GM10248 (cell line): ENCODE measurements at regions of chr6 and their contacts with region 1.

Region 1: DNA sequence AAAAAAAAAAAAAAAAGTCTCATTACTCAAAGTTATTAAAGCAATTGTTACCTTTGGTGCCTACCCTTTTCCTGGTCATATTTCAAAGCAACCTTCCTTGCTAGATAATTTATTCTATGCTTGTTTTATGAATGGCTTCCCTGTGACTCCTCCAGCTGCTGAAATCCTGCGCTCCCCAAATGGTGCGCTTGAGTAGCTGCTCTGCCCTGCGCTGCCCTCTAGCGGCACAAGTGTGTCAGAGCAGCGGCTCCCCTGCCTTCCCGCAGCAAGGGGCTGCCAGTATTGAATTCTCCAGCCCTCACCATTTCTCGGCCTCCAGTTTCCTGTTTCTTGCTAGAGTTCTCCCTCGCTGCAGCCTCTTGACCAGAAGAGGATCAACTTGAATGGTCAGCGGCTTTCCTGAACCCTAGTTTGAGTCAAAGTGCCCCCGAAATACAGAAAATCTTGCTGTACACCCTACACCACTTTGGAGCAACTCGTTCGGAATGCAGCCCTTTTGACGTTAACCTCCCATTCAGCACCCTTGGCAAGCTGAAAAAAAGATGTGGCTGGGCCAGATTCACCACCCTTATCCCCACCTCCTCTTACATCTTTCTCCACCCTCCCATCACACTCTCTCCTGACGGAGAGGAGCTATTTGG is 60.4 kb upstream of the KLHL31 start:
- DNase-seq: peak; percentile 84
- CTCF ChIP-seq: peak; percentile 99

Region 2: GRCh38 chr6:53426667-53427270 is 299.1 kb before region 1 on chr6:
- CTCF ChIA-PET with region 1: no interaction called
- POLR2A ChIA-PET with region 1: no interaction called
- DNase-seq: peak; percentile 40
- CTCF ChIP-seq: no peak

Region 3: DNA sequence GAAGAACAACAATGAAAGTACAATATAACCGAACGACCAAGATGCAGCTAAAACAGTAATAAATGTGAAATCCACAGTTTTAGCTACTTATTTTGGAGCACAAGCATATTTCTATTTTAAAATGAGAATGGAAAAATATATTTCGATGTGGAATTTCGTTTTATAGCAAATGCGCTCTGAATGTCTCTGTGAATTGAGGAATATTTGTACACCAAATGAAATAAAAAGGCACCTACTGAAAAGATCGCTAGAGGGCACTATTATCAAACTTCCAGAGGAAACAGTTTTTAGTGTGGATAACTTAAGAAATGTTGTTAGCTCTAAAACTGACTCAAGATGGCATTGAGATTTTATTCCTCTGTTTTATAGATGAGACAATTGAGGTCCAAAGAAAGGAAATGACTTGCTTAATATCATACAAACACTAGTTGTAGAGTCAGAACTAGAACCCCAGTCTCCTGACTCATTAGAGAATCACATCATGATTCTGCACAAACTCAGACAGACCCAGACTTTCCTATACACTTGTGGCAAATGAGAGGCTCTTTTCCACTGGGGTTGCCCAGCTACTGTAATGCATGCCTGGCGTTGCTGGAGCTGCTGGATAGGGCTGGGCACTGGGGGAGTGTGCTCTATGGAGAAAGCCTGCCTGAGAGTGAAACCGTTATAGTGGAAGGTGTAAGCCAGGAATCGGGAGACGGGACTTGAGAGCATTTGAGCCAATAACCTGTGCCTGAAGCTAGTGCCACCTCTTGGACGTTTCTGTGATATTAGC is 232.9 kb before region 1 on chr6:
- CTCF ChIA-PET with region 1: interaction called, 105 read pairs
- POLR2A ChIA-PET with region 1: no interaction called
- DNase-seq: peak; percentile 31
- CTCF ChIP-seq: peak; percentile 68

Region 4: GRCh38 chr6:53504512-53504911 is 221.4 kb before region 1 on chr6:
- CTCF ChIA-PET with region 1: interaction called, 11 read pairs
- POLR2A ChIA-PET with region 1: no interaction called
- DNase-seq: no peak
- CTCF ChIP-seq: no peak

Region 5: GRCh38 chr6:53701333-53702218 is 24.3 kb before region 1 on chr6:
- CTCF ChIA-PET with region 1: interaction called, 17 read pairs
- POLR2A ChIA-PET with region 1: no interaction called
- DNase-seq: no peak
- CTCF ChIP-seq: no peak

Region 6: GRCh38 chr6:53707108-53707897 is 18.6 kb before region 1 on chr6:
- CTCF ChIA-PET with region 1: interaction called, 100 read pairs
- POLR2A ChIA-PET with region 1: no interaction called
- DNase-seq: no peak
- CTCF ChIP-seq: no peak

Region 7: DNA sequence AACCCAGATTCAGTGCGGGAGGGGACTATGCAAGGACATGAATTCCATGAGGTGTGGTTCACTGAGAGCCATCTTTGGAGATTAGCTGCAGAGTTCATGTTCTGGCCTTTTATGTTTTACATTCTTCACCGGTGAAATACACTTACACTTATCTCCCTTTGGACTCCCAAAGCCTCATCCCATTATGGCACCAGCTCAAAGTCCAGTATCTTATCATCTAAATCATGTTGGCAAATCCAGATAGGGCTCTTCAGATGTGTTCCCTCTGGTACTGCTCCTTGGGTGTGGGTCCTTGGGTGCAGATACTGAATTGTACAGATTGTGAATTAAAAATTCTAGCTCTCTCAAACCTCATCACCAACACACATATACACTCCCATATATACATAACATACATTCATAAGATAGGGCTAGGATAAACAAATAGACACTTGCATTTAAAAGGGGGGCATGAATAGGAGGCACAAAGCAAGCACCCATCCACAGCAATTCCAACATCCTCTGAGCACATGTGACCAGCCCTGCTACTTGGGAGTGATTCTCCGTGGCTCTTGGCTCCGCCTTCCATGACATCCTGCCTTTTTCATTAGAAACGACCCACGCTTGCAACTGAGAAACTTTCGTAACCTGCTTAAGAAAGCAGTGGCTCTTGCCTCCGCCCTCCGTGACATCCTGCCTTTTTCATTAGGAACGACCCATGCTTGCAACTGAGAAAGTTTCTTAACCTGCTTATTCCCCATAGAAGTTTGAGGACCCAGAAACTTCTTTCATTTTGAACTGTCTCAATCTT is 15.3 kb after region 1 on chr6:
- CTCF ChIA-PET with region 1: interaction called, 62 read pairs
- POLR2A ChIA-PET with region 1: no interaction called
- DNase-seq: no peak
- CTCF ChIP-seq: no peak

Region 8: GRCh38 chr6:53749985-53750650 is 24.2 kb after region 1 on chr6:
- CTCF ChIA-PET with region 1: interaction called, 14 read pairs
- POLR2A ChIA-PET with region 1: no interaction called
- DNase-seq: no peak
- CTCF ChIP-seq: no peak